Activated B cell treated with CpG ODN at 0.5 μM for 24 hours (primary cell): ENCODE measurements at regions of chr1 and their contacts with region 1.

Region 1: GRCh38 chr1:90919900-90920299 is 101.9 kb downstream of the ZNF644 start:
- DNase-seq: no peak
- ATAC-seq: no peak
- H3K4me3 Mint-ChIP-seq: no peak overlapping the region
- H3K27ac Mint-ChIP-seq: no peak overlapping the region
- H3K4me1 Mint-ChIP-seq: peaks cover 56% of the 10 kb centered on the region
- H3K27me3 Mint-ChIP-seq: no peaks in the 10 kb centered on the region
- CTCF ChIP-seq: no peak

Region 2: DNA sequence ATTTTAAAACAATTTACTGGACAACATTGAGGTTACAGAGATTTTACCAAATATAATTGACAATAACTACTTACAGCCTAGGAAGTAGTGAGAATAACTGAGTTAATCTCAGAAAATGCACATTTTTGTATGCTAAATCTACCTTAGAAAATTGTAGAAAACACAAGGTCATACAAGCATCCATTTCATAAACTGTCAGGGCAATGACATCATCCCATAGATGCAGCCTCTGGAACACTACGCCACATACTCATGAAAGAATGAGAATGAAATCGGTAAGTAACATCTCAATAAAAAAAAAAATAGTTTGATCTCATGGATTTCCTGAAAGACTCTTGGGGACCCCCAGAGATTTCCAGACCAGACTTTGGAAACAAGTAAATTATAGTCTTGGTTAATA is 173.9 kb before region 1 on chr1:
- CTCF ChIA-PET with region 1: no interaction called
- POLR2A ChIA-PET with region 1: no interaction called
- intact Hi-C with region 1: no loop called
- DNase-seq: no peak
- ATAC-seq: no peak
- H3K4me3 Mint-ChIP-seq: no peak overlapping the region
- H3K27ac Mint-ChIP-seq: no peak overlapping the region
- H3K4me1 Mint-ChIP-seq: no peaks in the 10 kb centered on the region
- H3K27me3 Mint-ChIP-seq: peaks cover 27% of the 10 kb centered on the region
- CTCF ChIP-seq: no peak

Region 3: GRCh38 chr1:90902672-90903071 is 17.2 kb before region 1 on chr1:
- CTCF ChIA-PET with region 1: no interaction called
- POLR2A ChIA-PET with region 1: no interaction called
- intact Hi-C with region 1: loop called (anchors 2 kb)
- DNase-seq: no peak
- ATAC-seq: no peak
- H3K4me3 Mint-ChIP-seq: no peak overlapping the region
- H3K27ac Mint-ChIP-seq: no peak overlapping the region
- H3K4me1 Mint-ChIP-seq: no peaks in the 10 kb centered on the region
- H3K27me3 Mint-ChIP-seq: no peaks in the 10 kb centered on the region
- CTCF ChIP-seq: no peak

Region 4: GRCh38 chr1:90986953-90987352 is 67.1 kb after region 1 on chr1:
- CTCF ChIA-PET with region 1: no interaction called
- POLR2A ChIA-PET with region 1: no interaction called
- intact Hi-C with region 1: no loop called
- DNase-seq: no peak
- ATAC-seq: no peak
- H3K4me3 Mint-ChIP-seq: peak overlapping the region; percentile 33
- H3K27ac Mint-ChIP-seq: peak overlapping the region; percentile 20
- H3K4me1 Mint-ChIP-seq: peaks cover 85% of the 10 kb centered on the region
- H3K27me3 Mint-ChIP-seq: no peaks in the 10 kb centered on the region
- CTCF ChIP-seq: no peak